CD8-positive, alpha-beta T cell (primary cell): ENCODE measurements at regions of chr16 and their contacts with region 1.

Region 1: GRCh38 chr16:77569406-77569805 is 134.6 kb upstream of the ADAMTS18 start:
- DNase-seq: no peak
- ATAC-seq: no peak
- H3K4me3 ChIP-seq: no peak overlapping the region
- H3K4me3 Mint-ChIP-seq: no peak overlapping the region
- H3K27ac ChIP-seq: no peak overlapping the region
- H3K27ac Mint-ChIP-seq: no peak overlapping the region
- H3K4me1 ChIP-seq: no peaks in the 10 kb centered on the region
- H3K4me1 Mint-ChIP-seq: no peaks in the 10 kb centered on the region
- H3K27me3 ChIP-seq: no peaks in the 10 kb centered on the region
- H3K27me3 Mint-ChIP-seq: peaks cover 4% of the 10 kb centered on the region
- CTCF ChIP-seq: no peak

Region 2: GRCh38 chr16:77584205-77584859 is 14.9 kb after region 1 on chr16:
- CTCF ChIA-PET with region 1: interaction called, 25 read pairs
- POLR2A ChIA-PET with region 1: interaction called, 3 read pairs
- intact Hi-C with region 1: no loop called
- DNase-seq: peak in 7 of 9 experiments; percentile 9 to 60 (median 41)
- ATAC-seq: peak; percentile 36
- H3K4me3 ChIP-seq: no peak overlapping the region
- H3K4me3 Mint-ChIP-seq: no peak overlapping the region
- H3K27ac ChIP-seq: no peak overlapping the region
- H3K27ac Mint-ChIP-seq: no peak overlapping the region
- H3K4me1 ChIP-seq: no peaks in the 10 kb centered on the region
- H3K4me1 Mint-ChIP-seq: no peaks in the 10 kb centered on the region
- H3K27me3 ChIP-seq: peaks cover 0 to 3% of the 10 kb centered on the region in 2 experiments
- H3K27me3 Mint-ChIP-seq: peaks cover 12% of the 10 kb centered on the region
- CTCF ChIP-seq: peak; percentile 88